ENCODE measurements at regions of chr1 and their contacts with region 1.

Region 1: DNA sequence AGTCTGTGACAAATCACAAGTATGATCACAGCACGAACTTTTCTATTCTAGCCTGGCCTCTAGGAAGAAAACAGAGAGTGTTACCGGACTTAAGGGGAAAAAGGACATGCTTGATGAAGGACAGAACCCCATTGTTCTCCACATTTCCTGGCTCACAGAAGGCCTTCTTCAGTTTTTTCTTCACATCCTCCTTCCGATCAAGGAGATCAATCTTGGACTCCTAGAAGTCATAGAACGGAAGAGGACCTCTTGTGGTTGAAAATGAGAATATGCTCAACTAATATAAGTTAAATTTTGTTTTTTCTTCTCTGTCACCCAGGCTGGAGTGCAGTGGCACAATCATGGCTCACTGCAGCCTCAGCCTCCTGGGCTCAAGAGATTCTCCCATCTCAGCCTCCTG is 30.3 kb downstream of the YARS1 start:
- DNase-seq: peak in 1 of 2 experiments; percentile 27
- H3K4me3 ChIP-seq: no peak overlapping the region
- H3K4me1 ChIP-seq: no peaks in the 10 kb centered on the region
- H3K27me3 ChIP-seq: no peaks in the 10 kb centered on the region

Region 2: DNA sequence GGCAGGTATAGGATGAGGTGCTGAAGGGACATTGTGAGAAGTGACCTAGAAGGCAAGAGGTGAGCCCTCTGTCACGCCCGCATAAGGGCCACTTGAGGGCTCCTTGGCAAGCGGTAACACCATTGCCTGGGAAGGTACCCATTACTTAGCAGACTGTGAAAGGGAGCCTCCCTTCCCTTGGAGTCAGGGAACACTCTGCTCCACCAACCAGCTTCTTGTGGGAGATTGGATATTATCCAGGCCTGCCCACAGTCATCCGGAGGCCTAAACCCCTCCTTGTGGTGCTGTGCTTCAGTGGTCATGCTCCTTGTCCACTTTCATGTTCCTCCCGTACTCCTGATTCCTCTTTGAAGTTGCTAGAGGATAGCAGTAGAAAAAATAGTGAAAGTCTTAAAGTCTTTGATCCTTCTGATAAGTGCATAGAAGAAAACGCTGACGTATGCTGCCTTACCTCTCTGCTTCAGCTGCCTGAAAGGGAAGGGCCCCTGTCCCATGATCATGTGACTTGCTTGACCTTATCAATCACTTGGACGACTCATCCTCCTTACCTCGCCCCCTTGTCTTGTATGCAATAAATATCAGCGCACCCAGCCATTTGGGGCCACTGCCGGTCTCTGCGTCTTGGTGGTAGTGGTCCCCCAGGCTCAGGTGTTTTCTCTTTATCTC is 119.8 kb before region 1 on chr1:
- in situ Hi-C with region 1: loop called (anchors 10 kb)
- DNase-seq: no peak
- H3K4me3 ChIP-seq: no peak overlapping the region
- H3K4me1 ChIP-seq: 0 out of 2 replicates have a peak, but pooled peaks cover 2% of the 10 kb centered on the region
- H3K27me3 ChIP-seq: no peaks in the 10 kb centered on the region

Measured in HAP-1 (cell line).